ENCODE measurements at regions of chr2 and their contacts with region 1.

Region 1: GRCh38 chr2:54613794-54614257 is 109.6 kb upstream of the EML6 start:
- DNase-seq: peak; percentile 94
- H3K4me3 ChIP-seq: no peak overlapping the region
- H3K27ac ChIP-seq: peak overlapping the region; percentile 93
- H3K4me1 ChIP-seq: peaks cover 38% of the 10 kb centered on the region
- H3K27me3 ChIP-seq: no peaks in the 10 kb centered on the region
- CTCF ChIP-seq: no peak
- POLR2A ChIP-seq: no peak

Region 2: GRCh38 chr2:54161660-54162424 is 452.0 kb before region 1 on chr2:
- CTCF ChIA-PET with region 1: no interaction called
- POLR2A ChIA-PET with region 1: no interaction called
- dilution Hi-C with region 1: no loop called
- intact Hi-C with region 1: no loop called
- DNase-seq: peak; percentile 22
- H3K4me3 ChIP-seq: no peak overlapping the region
- H3K27ac ChIP-seq: no peak overlapping the region
- H3K4me1 ChIP-seq: no peaks in the 10 kb centered on the region
- H3K27me3 ChIP-seq: no peaks in the 10 kb centered on the region
- CTCF ChIP-seq: no peak
- POLR2A ChIP-seq: no peak

Region 3: DNA sequence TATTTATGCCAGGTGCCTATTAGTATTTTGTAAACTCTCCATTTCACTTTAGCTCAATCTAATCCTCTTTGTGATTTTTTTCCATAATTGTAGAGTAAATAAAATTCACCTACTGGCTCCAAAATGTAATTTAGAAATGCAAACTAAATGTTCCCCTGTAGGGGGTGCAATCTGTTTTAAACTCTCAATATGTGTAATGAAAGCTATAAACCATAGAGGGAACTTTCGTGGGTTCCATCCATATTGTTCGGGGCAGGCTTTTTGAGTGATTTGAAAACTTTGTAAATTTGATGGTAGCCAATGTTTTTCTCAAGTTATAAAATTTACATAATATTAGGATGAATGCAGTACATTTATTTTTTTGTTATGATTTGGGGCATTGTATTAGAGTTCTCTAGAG is 407.2 kb before region 1 on chr2:
- CTCF ChIA-PET with region 1: no interaction called
- POLR2A ChIA-PET with region 1: no interaction called
- dilution Hi-C with region 1: no loop called
- intact Hi-C with region 1: loop called (anchors 10 kb)
- DNase-seq: peak; percentile 58
- H3K4me3 ChIP-seq: no peak overlapping the region
- H3K27ac ChIP-seq: no peak overlapping the region
- H3K4me1 ChIP-seq: peaks cover 7% of the 10 kb centered on the region
- H3K27me3 ChIP-seq: no peaks in the 10 kb centered on the region
- CTCF ChIP-seq: peak; percentile 29 to 33
- POLR2A ChIP-seq: no peak

Region 4: DNA sequence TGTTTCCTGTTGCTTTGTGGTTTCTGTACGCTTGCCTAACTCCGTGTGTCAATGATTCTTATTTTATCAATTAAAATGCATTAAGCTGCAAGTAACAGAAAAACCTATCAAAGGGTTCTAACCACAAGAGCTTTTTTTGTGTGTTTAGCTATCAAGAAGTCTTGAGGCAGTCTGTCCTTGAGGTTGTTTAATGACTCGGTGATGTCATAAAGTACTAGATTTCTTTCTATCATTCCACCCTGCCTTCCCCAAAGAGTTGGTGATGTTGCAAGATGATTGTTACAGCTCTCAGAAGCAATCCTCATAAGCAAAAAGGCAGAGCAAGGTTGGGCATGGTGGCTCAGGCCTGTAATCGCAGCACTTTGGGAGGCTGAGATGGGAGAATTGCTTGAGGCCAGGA is 209.6 kb before region 1 on chr2:
- CTCF ChIA-PET with region 1: no interaction called
- POLR2A ChIA-PET with region 1: no interaction called
- dilution Hi-C with region 1: no loop called
- intact Hi-C with region 1: no loop called
- DNase-seq: no peak
- H3K4me3 ChIP-seq: no peak overlapping the region
- H3K27ac ChIP-seq: no peak overlapping the region
- H3K4me1 ChIP-seq: peaks cover 8% of the 10 kb centered on the region
- H3K27me3 ChIP-seq: no peaks in the 10 kb centered on the region
- CTCF ChIP-seq: no peak
- POLR2A ChIP-seq: no peak

Region 5: DNA sequence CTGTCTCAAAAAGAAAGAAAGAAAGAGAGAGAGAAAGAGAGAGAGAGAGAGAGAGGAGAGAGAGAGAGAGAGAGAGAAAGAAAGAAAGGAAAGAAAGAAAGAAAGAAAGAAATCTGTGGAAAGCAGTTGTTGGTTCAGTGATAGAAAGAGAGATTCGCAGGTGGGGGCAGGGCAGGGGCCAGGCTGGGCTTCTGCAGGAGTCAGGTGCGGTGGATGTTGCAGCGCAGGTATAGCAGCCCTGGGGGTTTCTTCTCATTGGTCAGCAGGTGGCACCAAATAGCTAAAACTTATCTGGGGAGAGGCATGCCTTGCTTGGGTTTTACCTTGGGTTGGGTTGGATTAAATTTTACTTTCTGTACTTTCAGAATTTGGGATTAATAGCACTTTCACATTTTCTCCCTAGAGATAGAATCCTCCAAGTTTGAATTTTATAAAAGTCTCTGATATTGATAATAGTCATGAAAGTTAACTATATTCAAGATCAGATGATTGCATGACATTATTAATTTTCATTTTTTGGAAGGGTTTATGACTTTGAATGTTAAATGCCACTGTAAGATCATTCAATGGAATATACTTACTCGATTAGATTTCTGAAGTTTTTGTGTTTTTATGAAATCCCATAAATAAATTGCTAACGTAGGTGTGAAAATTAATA is 91.1 kb before region 1 on chr2:
- CTCF ChIA-PET with region 1: interaction called, 6 read pairs
- POLR2A ChIA-PET with region 1: no interaction called
- dilution Hi-C with region 1: no loop called
- intact Hi-C with region 1: loop called (anchors 5 kb)
- DNase-seq: peak; percentile 44
- H3K4me3 ChIP-seq: no peak overlapping the region
- H3K27ac ChIP-seq: no peak overlapping the region
- H3K4me1 ChIP-seq: peaks cover 10% of the 10 kb centered on the region
- H3K27me3 ChIP-seq: no peaks in the 10 kb centered on the region
- CTCF ChIP-seq: peak; percentile 48 to 68
- POLR2A ChIP-seq: no peak

Region 6: DNA sequence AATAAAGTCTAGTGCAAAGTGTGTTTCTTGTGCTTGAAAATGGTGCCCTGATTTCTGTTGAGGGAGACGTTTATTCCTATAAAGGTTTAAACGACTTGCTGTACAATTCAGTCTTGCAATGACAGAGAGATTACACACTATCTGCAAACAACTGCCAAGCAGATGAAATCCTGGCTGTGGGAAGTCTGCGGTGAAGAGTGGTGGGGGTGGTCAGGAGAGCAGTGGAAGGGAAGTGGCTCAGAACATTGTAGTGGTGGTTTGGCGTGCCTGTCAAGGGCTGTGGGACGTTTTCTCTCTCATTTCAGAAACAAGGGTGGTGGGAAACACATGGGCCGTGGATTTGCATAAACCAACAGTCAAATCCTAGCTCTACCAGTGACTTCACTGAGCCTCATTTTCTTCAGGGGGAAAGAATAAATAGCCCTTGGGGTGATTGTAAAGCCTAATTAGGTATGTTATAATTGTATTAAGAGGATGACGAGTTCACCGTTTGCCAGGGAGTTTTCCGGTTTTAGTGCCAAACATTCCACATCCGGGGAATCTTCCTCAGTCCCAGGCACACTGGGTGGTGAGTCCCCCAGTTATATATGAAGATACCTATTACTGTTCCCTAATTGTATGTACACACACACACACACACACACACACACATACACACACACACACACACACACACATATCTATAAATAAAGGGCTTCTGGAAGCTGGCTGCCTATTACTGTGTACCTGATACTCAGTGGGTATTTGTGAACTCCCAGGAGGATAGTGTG is 42.7 kb before region 1 on chr2:
- CTCF ChIA-PET with region 1: interaction called, 5 read pairs
- POLR2A ChIA-PET with region 1: interaction called, 5 read pairs
- dilution Hi-C with region 1: no loop called
- intact Hi-C with region 1: loop called (anchors 1 kb)
- DNase-seq: peak; percentile 84
- H3K4me3 ChIP-seq: no peak overlapping the region
- H3K27ac ChIP-seq: peak overlapping the region; percentile 100
- H3K4me1 ChIP-seq: peaks cover 66% of the 10 kb centered on the region
- H3K27me3 ChIP-seq: no peaks in the 10 kb centered on the region
- CTCF ChIP-seq: no peak
- POLR2A ChIP-seq: no peak

Region 7: DNA sequence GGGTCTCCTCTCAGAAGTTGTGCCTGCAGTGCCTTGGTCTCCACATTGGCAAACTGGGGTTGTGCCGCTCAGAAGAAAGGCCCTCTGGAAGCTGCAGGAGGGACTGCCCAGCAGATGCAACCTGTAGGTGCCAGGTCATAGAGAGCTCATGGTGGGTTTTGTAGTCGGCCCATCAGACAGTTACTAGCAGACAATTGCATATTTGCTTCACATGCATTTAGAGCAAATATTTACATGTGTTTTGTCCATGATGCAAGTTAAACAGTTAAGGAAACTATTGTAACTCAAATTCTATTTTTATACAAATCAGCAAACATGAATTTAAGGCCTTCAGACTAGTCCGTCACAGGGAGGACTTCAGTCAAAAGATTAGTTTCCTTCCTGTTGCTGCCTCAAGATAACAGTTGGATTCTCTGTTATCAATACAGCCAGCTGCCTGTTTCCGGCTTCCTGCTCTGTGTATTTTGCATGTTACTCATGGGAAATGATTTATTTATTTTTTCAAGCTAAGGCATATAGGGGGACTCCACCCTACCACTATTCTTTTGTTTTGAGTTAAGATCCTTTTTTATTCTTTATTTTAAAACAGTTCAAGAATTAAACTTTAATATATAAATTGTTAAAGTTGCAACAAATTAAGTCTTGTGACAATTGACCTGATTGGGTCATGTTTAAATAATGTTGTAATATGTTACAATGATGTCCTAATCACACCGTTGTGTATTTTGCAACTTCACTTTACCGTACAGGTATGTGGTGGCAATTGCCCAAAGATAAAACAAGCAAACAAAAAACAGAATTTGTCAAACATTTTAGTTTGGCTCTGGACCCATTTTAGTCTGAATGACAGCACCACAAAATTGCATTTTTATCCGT is 24.2 kb before region 1 on chr2:
- CTCF ChIA-PET with region 1: interaction called, 8 read pairs
- POLR2A ChIA-PET with region 1: no interaction called
- dilution Hi-C with region 1: no loop called
- intact Hi-C with region 1: loop called (anchors 1 kb)
- DNase-seq: peak; percentile 99
- H3K4me3 ChIP-seq: peak overlapping the region in 1 of 3 experiments; percentile 46
- H3K27ac ChIP-seq: peak overlapping the region; percentile 91
- H3K4me1 ChIP-seq: peaks cover 64% of the 10 kb centered on the region
- H3K27me3 ChIP-seq: no peaks in the 10 kb centered on the region
- CTCF ChIP-seq: no peak
- POLR2A ChIP-seq: peak; percentile 95

Region 8: GRCh38 chr2:54624591-54625071 is 10.8 kb after region 1 on chr2:
- CTCF ChIA-PET with region 1: interaction called, 10 read pairs
- POLR2A ChIA-PET with region 1: no interaction called
- dilution Hi-C with region 1: no loop called
- intact Hi-C with region 1: no loop called
- DNase-seq: no peak
- H3K4me3 ChIP-seq: no peak overlapping the region
- H3K27ac ChIP-seq: no peak overlapping the region
- H3K4me1 ChIP-seq: no peaks in the 10 kb centered on the region
- H3K27me3 ChIP-seq: no peaks in the 10 kb centered on the region
- CTCF ChIP-seq: no peak
- POLR2A ChIP-seq: no peak

Measured in endothelial cell of umbilical vein (primary cell).